Panc1 (cell line): ENCODE measurements at regions of chr15 and their contacts with region 1.

Region 1: GRCh38 chr15:89442671-89443307 is 53.6 kb downstream of the RHCG start:
- DNase-seq: peak; percentile 5
- ATAC-seq: peak; percentile 84
- H3K4me3 ChIP-seq: no peak overlapping the region
- H3K27ac ChIP-seq: no peak overlapping the region
- H3K4me1 ChIP-seq: no peaks in the 10 kb centered on the region
- H3K27me3 ChIP-seq: no peaks in the 10 kb centered on the region
- CTCF ChIP-seq: peak; percentile 92

Region 2: DNA sequence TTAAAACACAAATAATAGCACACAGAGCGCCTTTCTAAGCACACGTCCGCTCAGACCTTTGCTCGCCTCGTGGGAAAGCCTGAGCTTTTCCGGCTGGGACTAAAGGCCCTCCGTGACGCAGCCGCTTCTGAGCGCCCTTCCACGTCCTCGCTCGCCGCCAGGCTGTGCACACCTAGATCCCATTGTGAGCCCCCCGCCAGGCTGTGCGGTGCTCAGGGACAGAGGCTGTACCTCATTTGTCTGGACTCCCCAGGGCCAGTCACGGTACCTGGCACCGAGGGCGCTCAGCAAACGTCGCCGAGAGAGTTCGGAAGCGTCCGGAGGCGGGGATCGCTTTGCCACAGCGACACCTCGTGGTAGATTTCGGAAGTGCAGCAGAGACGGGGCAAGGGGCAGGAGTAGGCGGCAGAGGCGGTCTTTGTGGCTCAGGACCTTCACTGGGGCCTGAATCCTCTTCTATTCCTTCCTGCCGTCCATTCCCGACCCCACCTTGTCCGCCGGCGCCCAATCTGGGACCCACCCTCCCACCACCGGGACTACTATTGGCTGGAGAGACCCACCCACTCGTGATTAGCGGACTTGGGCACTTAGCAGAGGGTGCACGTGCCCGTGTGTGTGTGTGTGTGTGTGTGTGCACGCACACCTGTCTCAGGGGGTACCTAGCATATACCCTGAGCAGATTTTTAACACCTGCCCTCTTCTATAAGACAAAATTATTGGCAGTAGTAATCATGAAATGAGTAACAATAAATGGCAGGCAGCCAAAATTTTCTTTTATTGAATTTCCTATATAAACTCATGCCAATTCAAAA is 12.1 kb before region 1 on chr15:
- CTCF ChIA-PET with region 1: interaction called, 10 read pairs
- POLR2A ChIA-PET with region 1: no interaction called
- in situ Hi-C with region 1: no loop called
- intact Hi-C with region 1: no loop called
- DNase-seq: peak; percentile 64
- ATAC-seq: peak; percentile 98
- H3K4me3 ChIP-seq: peak overlapping the region; percentile 40 to 60
- H3K27ac ChIP-seq: peak overlapping the region; percentile 35; the same call in 1 of the 2 replicates
- H3K4me1 ChIP-seq: peaks cover 8% of the 10 kb centered on the region; the same call in 1 of the 2 replicates
- H3K27me3 ChIP-seq: no peaks in the 10 kb centered on the region
- CTCF ChIP-seq: peak; percentile 96

Region 3: DNA sequence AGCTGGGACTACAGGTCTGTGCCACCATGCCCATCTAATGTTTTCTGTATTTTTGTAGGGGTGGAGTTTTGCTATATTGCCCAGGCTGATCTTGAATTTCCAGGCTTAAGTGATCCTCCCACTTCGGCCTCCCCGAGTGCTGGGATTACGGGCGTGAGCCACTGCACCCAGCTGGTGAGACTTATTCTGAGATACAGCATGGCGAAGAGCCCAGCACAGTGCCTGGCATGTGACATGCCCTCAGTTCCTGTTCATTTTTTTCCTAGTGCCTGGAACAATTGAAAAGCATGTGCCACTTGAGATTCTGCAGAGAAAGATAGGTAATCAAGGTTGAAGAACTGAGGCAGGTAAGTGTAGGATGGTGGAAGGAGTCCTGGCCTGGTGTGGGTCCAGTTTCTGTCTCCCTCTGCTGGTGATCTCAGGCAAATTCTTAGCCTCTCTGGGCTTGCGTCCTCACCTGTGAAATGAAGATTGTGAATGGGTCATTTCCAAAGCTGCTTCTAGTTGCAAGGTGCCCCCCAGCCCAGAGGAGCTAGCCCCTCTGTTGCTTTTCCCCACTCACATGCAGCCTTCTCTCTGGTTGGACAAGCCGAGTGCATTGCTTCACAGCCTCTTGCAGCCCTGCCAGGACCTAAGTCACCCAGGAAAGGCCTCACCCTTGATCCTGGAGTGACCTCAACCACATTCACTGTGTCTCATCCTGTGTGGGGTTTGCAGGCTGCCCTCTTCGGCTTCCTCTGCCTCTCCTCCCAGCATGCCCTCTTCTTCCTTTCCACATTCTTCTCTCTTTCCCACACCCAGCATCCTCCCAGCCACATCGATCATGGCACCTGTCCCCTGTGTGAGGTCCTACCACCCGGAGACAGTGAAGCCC is 57.8 kb after region 1 on chr15:
- CTCF ChIA-PET with region 1: interaction called, 11 read pairs
- POLR2A ChIA-PET with region 1: no interaction called
- in situ Hi-C with region 1: no loop called
- intact Hi-C with region 1: no loop called
- DNase-seq: no peak
- ATAC-seq: no peak
- H3K4me3 ChIP-seq: no peak overlapping the region
- H3K27ac ChIP-seq: no peak overlapping the region
- H3K4me1 ChIP-seq: peaks cover 24% of the 10 kb centered on the region
- H3K27me3 ChIP-seq: no peaks in the 10 kb centered on the region
- CTCF ChIP-seq: peak; percentile 80

Region 4: GRCh38 chr15:89556413-89557262 is 113.8 kb after region 1 on chr15:
- CTCF ChIA-PET with region 1: no interaction called
- POLR2A ChIA-PET with region 1: no interaction called
- in situ Hi-C with region 1: no loop called
- intact Hi-C with region 1: loop called (anchors 5 kb)
- DNase-seq: peak; percentile 60
- ATAC-seq: peak; percentile 88
- H3K4me3 ChIP-seq: no peak overlapping the region
- H3K27ac ChIP-seq: no peak overlapping the region
- H3K4me1 ChIP-seq: peaks cover 3% of the 10 kb centered on the region
- H3K27me3 ChIP-seq: no peaks in the 10 kb centered on the region
- CTCF ChIP-seq: peak; percentile 81